ENCODE measurements at regions of chr15 and their contacts with region 1.

Region 1: DNA sequence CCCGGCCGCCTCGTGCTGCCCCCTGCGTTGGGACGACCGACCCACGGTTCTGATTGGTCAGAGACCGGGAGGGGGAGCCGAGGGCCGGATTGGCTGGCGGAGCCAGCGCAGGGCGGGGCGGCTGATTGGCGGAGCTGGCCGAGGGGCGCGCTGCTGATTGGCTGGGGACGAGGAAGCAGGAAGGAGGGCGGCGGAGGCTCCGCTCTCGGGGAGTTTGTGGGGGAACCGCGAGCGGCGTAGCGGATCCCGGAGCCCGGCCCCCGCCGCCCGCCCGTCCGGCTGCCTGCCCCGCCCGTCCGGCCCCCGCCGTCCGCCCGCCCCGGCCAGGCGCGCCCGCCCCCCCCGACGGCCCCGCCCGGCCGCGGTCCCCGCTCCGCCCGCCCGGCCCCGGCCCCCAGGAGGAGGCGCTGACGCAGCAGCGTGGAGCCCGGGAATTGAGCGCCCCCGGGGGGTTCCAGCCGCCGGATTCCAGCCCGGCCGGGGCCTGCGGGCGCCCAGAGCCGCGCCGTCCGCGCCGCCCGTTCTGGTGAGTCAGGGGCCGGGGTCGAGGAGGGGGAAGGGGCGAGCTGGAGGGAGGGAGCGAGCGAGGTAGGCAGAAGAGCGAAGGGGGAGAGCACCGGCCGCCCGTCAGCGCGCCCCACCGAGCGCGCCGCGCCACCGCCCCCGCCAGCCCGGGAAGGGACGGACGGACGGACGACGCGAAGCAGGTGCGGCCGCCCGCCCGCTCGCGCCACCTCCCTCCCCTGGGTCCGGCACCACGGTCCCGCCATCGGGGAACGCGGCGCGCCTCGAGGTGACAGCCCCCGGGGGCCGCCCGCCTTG is at the start of gene BAHD1:
- DNase-seq: peak; percentile 92
- ATAC-seq: peak; percentile 88
- H3K4me3 ChIP-seq: peak within 1 kb of the TSS; percentile 83
- H3K27ac ChIP-seq: peak within 1 kb of the TSS; percentile 23; the same call in 1 of the 2 replicates
- H3K4me1 ChIP-seq: peaks cover 20% of the 10 kb centered on the region
- H3K27me3 ChIP-seq: peaks cover 43% of the 10 kb centered on the region
- CTCF ChIP-seq: peak; percentile 32
- POLR2A ChIP-seq: no peak
- RAD21 ChIP-seq: no peak
- total RNA-seq, gene BAHD1: 3.0 and 3.6 TPM in 2 replicates

Region 2: DNA sequence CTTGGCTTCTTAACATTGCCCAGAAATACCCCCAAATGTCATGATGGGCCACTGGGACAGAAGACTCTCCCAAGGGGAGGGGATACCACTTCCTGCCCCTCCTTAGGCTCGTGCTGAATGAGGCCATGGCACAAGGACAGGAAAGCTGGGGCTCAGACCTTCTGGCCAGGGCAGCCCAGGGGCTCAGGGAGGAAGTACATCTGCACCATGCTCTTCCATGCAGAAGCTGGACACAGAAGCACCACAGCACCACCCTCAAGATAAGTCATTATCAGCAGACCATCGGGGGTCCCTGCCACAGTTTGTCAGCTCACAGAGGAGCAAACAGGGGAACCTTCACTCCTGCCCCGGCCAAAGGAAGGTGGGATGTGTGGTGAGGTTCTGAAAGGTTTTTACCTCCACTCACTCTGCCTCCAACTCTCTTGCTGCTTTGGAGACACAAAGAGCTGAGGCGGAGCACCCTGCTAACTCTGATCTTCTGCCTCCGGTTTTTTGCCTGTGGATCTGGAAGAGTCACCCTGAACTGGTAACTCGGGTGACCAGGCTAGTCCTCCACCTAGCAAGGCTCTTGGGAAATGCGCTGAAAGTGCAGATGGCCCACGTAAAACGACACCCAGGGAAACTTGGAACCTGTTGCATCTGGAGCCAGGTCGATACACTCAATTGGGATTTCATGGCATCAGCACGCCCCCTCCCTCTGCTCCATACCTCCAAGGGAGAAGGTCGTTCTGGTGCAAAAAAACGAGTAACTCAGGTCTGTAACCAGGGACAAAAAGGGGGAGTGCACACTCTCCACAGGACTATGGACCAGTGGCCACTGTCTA is 340.6 kb before region 1 on chr15:
- CTCF ChIA-PET with region 1: no interaction called
- POLR2A ChIA-PET with region 1: interaction called, 14 read pairs
- dilution Hi-C with region 1: no loop called
- in situ Hi-C with region 1: no loop called
- intact Hi-C with region 1: no loop called
- DNase-seq: peak; percentile 66
- ATAC-seq: no peak; the same call in 1 of the 2 replicates
- H3K4me3 ChIP-seq: no peak overlapping the region
- H3K27ac ChIP-seq: peak overlapping the region; percentile 80
- H3K4me1 ChIP-seq: peaks cover 68% of the 10 kb centered on the region
- H3K27me3 ChIP-seq: no peaks in the 10 kb centered on the region
- CTCF ChIP-seq: no peak
- POLR2A ChIP-seq: no peak
- RAD21 ChIP-seq: no peak

Region 3: GRCh38 chr15:40506964-40507571 is 66.1 kb after region 1 on chr15:
- CTCF ChIA-PET with region 1: interaction called, 3 read pairs
- POLR2A ChIA-PET with region 1: no interaction called
- dilution Hi-C with region 1: no loop called
- in situ Hi-C with region 1: no loop called
- intact Hi-C with region 1: loop called (anchors 5 kb)
- DNase-seq: peak; percentile 64
- ATAC-seq: peak; percentile 96
- H3K4me3 ChIP-seq: peak overlapping the region; percentile 26; the same call in 1 of the 2 replicates
- H3K27ac ChIP-seq: no peak overlapping the region
- H3K4me1 ChIP-seq: peaks cover 4% of the 10 kb centered on the region; the same call in 1 of the 2 replicates
- H3K27me3 ChIP-seq: peaks cover 26% of the 10 kb centered on the region
- CTCF ChIP-seq: peak; percentile 79
- POLR2A ChIP-seq: no peak
- RAD21 ChIP-seq: peak; percentile 69

Region 4: DNA sequence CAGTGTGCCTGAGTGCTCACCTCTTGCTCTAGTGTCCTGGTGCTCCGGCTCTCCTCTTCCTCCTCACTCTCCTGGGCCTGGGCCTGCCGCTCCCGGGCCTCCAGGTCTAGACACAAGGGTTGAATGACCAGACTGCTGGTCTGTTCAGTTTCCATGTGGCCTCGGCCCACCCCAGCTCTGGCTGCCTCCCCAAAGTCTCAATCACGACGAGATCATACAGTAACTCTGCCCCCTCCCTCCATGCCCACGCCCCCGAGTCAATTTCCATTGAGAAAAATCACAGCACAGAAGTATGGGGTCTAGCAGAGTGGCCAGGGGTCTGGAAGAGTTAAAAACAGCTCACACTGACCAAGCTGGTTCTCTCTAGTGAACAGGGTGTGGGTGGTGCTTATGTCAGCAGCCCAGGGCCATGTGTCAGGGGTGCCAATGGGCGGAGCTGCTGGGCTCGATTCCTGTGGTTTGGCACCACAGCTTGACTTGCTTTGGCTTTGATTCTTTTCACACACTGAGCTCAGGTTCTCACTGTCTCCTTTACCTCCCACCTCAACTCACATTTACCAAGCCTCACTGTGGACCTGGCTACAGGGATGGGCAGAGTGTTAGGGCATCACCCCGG is 335.7 kb after region 1 on chr15:
- CTCF ChIA-PET with region 1: no interaction called
- POLR2A ChIA-PET with region 1: no interaction called
- dilution Hi-C with region 1: no loop called
- in situ Hi-C with region 1: no loop called
- intact Hi-C with region 1: no loop called
- DNase-seq: peak; percentile 41
- ATAC-seq: peak; percentile 68
- H3K4me3 ChIP-seq: no peak overlapping the region
- H3K27ac ChIP-seq: no peak overlapping the region
- H3K4me1 ChIP-seq: no peaks in the 10 kb centered on the region
- H3K27me3 ChIP-seq: no peaks in the 10 kb centered on the region
- CTCF ChIP-seq: no peak
- POLR2A ChIP-seq: no peak
- RAD21 ChIP-seq: no peak